ENCODE measurements at regions of chr5 and their contacts with region 1.

Region 1: GRCh38 chr5:119267958-119268386 is 87.8 kb upstream of the TNFAIP8 start:
- DNase-seq: peak; percentile 95
- H3K4me3 ChIP-seq: peak overlapping the region; percentile 89 to 94
- H3K27ac ChIP-seq: peak overlapping the region; percentile 94 to 97
- H3K4me1 ChIP-seq: peaks cover 0 to 41% (median 27%) of the 10 kb centered on the region in 4 donors
- H3K27me3 ChIP-seq: no peaks in the 10 kb centered on the region
- CTCF ChIP-seq: peak; percentile 21 to 25

Region 2: GRCh38 chr5:118006219-118006618 is 1261.8 kb before region 1 on chr5:
- intact Hi-C with region 1: no loop called
- DNase-seq: no peak
- H3K4me3 ChIP-seq: no peak overlapping the region
- H3K27ac ChIP-seq: no peak overlapping the region
- H3K4me1 ChIP-seq: no peaks in the 10 kb centered on the region
- H3K27me3 ChIP-seq: no peaks in the 10 kb centered on the region
- CTCF ChIP-seq: no peak

Region 3: DNA sequence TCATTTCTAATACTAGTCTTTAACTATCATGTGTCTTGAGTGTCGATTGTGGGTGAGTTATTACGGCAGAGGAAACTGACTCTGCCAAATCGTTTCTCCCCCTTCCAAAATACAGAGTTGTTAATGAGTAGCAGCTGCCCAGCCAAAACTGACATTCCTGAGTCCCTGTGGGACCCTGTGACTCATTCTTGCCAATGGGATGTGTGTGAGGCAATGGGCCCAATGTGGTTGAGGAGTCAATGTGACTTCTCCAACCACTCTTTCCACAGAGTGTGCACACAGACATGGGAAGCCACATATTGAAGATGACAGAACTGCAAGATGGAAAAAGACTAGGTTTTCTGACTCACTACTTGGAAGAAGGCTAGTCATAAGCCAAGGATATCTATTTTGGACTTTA is 714.3 kb before region 1 on chr5:
- intact Hi-C with region 1: no loop called
- DNase-seq: peak; percentile 88 to 89
- H3K4me3 ChIP-seq: no peak overlapping the region
- H3K27ac ChIP-seq: no peak overlapping the region
- H3K4me1 ChIP-seq: no peaks in the 10 kb centered on the region
- H3K27me3 ChIP-seq: no peaks in the 10 kb centered on the region
- CTCF ChIP-seq: no peak

Region 4: GRCh38 chr5:119153629-119154028 is 114.3 kb before region 1 on chr5:
- intact Hi-C with region 1: no loop called
- DNase-seq: no peak
- H3K4me3 ChIP-seq: no peak overlapping the region
- H3K27ac ChIP-seq: no peak overlapping the region
- H3K4me1 ChIP-seq: no peaks in the 10 kb centered on the region
- H3K27me3 ChIP-seq: no peaks in the 10 kb centered on the region
- CTCF ChIP-seq: no peak

Region 5: DNA sequence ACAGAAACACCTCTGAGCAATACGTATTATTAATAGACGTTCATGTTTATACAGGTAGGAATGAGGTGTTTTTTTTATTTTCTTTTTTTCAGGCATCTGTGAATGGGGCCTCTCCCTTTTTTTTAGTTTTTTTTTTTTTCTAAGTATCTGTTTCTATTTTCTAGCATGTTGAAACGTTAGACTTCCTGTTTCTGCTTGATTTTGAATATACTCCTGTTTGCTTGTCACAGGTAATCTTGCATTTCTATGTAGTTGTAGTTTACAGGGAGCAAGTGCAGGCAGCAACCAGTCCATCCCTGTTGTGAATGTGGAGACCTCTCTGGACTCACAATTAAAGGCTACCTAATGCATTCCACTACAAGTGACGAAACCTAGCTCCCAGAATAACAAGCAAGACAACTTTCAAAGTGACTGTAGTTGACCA is 65.0 kb after region 1 on chr5:
- intact Hi-C with region 1: loop called (anchors 5 kb)
- DNase-seq: no peak
- H3K4me3 ChIP-seq: no peak overlapping the region
- H3K27ac ChIP-seq: no peak overlapping the region
- H3K4me1 ChIP-seq: peaks cover 0 to 52% (median 21%) of the 10 kb centered on the region in 4 donors
- H3K27me3 ChIP-seq: no peaks in the 10 kb centered on the region
- CTCF ChIP-seq: no peak

Region 6: GRCh38 chr5:119397518-119398380 is 129.8 kb after region 1 on chr5:
- intact Hi-C with region 1: loop called (anchors 5 kb)
- DNase-seq: no peak
- H3K4me3 ChIP-seq: no peak overlapping the region
- H3K27ac ChIP-seq: peak overlapping the region; percentile 67 to 71
- H3K4me1 ChIP-seq: peaks cover 0 to 73% (median 20%) of the 10 kb centered on the region in 4 donors
- H3K27me3 ChIP-seq: no peaks in the 10 kb centered on the region
- CTCF ChIP-seq: no peak

Region 7: GRCh38 chr5:119411935-119412602 is 144.1 kb after region 1 on chr5:
- intact Hi-C with region 1: loop called (anchors 5 kb)
- DNase-seq: peak; percentile 52 to 78
- H3K4me3 ChIP-seq: peak overlapping the region; percentile 48 to 55
- H3K27ac ChIP-seq: peak overlapping the region; percentile 71 to 77
- H3K4me1 ChIP-seq: peaks cover 0 to 17% (median 3%) of the 10 kb centered on the region in 4 donors
- H3K27me3 ChIP-seq: no peaks in the 10 kb centered on the region
- CTCF ChIP-seq: peak; percentile 95

Measured in tibial artery (tissue), 4 donors.